Panc1 (cell line): ENCODE measurements at regions of chr3 and their contacts with region 1.

Region 1: DNA sequence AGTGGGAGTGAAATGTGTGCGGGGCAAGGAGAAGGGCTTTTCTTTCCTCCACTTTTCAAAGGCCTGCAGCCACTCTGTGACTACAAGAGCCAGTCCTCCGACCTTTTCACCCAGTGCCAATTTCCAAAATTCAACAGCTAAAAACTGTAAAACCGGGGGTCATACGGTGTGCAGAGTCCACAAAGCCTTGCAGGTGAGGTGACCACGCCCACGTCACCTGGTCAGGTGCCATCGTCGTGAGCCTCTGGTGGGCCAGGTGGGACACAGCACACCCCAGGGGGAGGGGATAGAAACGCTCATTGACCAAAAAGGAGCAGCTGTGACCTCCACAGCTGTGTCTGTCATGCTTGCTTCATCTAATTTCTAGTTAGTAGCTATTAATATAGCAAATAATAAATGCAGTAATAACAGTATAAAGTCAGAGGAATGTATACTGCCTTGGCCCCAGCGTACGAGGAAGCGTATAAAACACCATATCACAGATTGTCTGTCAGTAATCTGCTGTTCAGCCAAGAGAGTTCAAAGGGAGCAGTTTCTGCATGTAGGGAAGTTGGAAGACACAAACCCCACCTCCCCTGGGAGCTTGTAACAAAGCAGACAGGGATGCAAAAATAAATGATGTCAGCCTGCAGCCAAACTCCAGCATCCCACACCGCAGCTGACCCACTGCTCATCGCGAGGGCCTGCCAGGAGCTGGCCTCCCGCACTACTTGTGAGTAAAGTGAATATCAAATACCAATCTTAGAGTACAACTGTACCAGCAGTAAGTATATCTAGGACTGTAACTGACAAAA is 86.7 kb downstream of the VGLL4 start:
- DNase-seq: no peak
- ATAC-seq: no peak
- H3K4me3 ChIP-seq: no peak overlapping the region
- H3K27ac ChIP-seq: peak overlapping the region; percentile 96
- H3K4me1 ChIP-seq: peaks cover 99% of the 10 kb centered on the region
- H3K27me3 ChIP-seq: no peaks in the 10 kb centered on the region
- CTCF ChIP-seq: no peak

Region 2: GRCh38 chr3:11643605-11644087 is 86.6 kb after region 1 on chr3 and contains the start of gene VGLL4:
- CTCF ChIA-PET with region 1: interaction called, 4 read pairs
- POLR2A ChIA-PET with region 1: no interaction called
- in situ Hi-C with region 1: no loop called
- intact Hi-C with region 1: loop called (anchors 5 kb)
- DNase-seq: no peak
- ATAC-seq: peak; percentile 85
- H3K4me3 ChIP-seq: peak within 1 kb of the TSS; percentile 84 to 86
- H3K27ac ChIP-seq: peak within 1 kb of the TSS; percentile 99
- H3K4me1 ChIP-seq: peaks cover 12% of the 10 kb centered on the region
- H3K27me3 ChIP-seq: no peaks in the 10 kb centered on the region
- CTCF ChIP-seq: peak; percentile 17; the same call in 1 of the 2 replicates
- total RNA-seq, gene VGLL4: 66.0 TPM